WTC11 (cell line): ENCODE measurements at regions of chr20 and their contacts with region 1.

Region 1: DNA sequence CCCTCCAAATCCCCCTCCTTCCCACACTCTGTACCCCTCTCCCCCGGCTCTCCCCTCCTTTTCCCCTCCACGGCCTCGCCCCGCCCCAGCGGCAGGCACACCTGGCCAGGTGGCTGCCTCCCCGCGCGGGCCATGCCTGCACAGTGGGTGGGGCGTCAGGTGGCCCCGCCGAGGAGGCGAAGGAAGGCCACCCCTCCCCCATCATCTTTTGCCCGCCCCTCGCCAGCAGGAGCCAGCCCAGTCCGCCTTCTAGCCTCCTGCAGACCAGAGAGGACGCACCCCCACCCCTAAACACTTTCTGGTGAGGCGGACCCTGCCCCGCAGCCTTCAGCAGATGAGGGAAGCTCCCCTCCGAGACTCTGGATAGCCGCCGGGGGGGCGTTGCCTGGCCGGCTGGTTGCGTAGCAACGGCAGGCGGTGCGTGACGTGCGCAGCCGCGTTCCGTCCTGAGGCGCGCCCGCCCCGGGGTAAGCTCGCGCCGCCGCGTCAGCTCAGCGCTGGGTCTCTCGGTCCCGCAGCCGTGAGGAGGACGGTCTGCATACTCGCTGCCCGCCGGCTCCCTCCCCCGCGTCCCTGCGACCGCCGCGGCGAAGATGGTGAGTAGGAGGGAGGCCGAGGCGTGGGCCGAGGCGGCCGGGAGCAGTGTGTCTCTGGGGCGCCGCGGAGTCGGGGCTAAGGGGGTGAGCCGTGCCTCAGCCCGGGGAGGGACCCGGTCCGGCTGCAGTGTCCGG is at the start of gene DSTN:
- DNase-seq: peak; percentile 97
- ATAC-seq: peak; percentile 93
- H3K4me3 Mint-ChIP-seq: peak within 1 kb of the TSS; percentile 88
- H3K27ac Mint-ChIP-seq: peak within 1 kb of the TSS; percentile 94
- H3K4me1 Mint-ChIP-seq: peaks cover 50% of the 10 kb centered on the region
- H3K27me3 Mint-ChIP-seq: no peaks in the 10 kb centered on the region
- CTCF ChIP-seq: no peak
- total RNA-seq, gene DSTN: 145 to 153 TPM (median 149 TPM) in 3 replicates

Region 2: GRCh38 chr20:17273717-17274116 is 296.1 kb before region 1 on chr20:
- CTCF ChIA-PET with region 1: no interaction called
- POLR2A ChIA-PET with region 1: no interaction called
- DNase-seq: no peak
- ATAC-seq: no peak
- H3K4me3 Mint-ChIP-seq: no peak overlapping the region
- H3K27ac Mint-ChIP-seq: no peak overlapping the region
- H3K4me1 Mint-ChIP-seq: no peaks in the 10 kb centered on the region
- H3K27me3 Mint-ChIP-seq: no peaks in the 10 kb centered on the region; the same call in 1 of the 2 replicates
- CTCF ChIP-seq: no peak

Region 3: GRCh38 chr20:17504898-17505635 is 64.7 kb before region 1 on chr20:
- CTCF ChIA-PET with region 1: interaction called, 12 read pairs
- POLR2A ChIA-PET with region 1: interaction called, 7 read pairs
- DNase-seq: peak; percentile 58
- ATAC-seq: peak; percentile 83
- H3K4me3 Mint-ChIP-seq: peak overlapping the region; percentile 72
- H3K27ac Mint-ChIP-seq: no peak overlapping the region; the same call in 1 of the 2 replicates
- H3K4me1 Mint-ChIP-seq: peaks cover 16% of the 10 kb centered on the region
- H3K27me3 Mint-ChIP-seq: peaks cover 10% of the 10 kb centered on the region
- CTCF ChIP-seq: peak; percentile 29; the same call in 1 of the 2 replicates

Region 4: GRCh38 chr20:17530716-17531664 is 38.8 kb before region 1 on chr20 and contains the start of gene BFSP1:
- CTCF ChIA-PET with region 1: interaction called, 5 read pairs
- POLR2A ChIA-PET with region 1: interaction called, 12 read pairs
- DNase-seq: peak; percentile 74
- ATAC-seq: peak; percentile 69
- H3K4me3 Mint-ChIP-seq: peak within 1 kb of the TSS; percentile 82
- H3K27ac Mint-ChIP-seq: peak within 1 kb of the TSS; percentile 85; the same call in 1 of the 2 replicates
- H3K4me1 Mint-ChIP-seq: peaks cover 26% of the 10 kb centered on the region
- H3K27me3 Mint-ChIP-seq: peaks cover 22% of the 10 kb centered on the region
- CTCF ChIP-seq: no peak
- total RNA-seq, gene BFSP1: 1.9 to 3.0 TPM (median 2.7 TPM) in 3 replicates

Region 5: DNA sequence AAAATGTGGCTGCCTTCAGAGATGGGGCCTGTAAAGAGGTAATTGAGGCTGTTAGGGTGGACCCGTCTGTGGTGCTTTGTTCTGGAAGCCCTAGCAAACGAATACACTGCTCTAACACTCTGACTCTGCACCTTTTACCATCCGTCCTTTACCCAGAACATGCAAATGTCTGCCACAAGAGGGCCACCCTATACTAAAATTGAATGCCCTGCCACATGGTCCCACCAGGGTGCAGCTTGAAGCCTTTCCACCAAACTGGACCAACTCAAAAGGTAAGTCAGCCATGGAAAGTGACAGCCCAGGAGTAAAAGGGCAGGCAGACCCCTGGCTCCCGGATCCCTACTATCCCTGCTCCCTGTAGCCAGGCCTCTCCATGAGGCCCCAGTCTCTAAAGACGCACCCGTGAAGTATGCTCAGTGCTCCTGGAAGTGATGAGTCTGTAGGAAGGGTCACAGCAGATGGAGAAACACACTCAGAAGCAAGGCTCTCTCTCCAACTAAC is 32.8 kb before region 1 on chr20:
- CTCF ChIA-PET with region 1: interaction called, 14 read pairs
- POLR2A ChIA-PET with region 1: interaction called, 9 read pairs
- DNase-seq: peak; percentile 77
- ATAC-seq: peak; percentile 94
- H3K4me3 Mint-ChIP-seq: no peak overlapping the region
- H3K27ac Mint-ChIP-seq: no peak overlapping the region
- H3K4me1 Mint-ChIP-seq: peaks cover 21% of the 10 kb centered on the region
- H3K27me3 Mint-ChIP-seq: peaks cover 1% of the 10 kb centered on the region
- CTCF ChIP-seq: peak; percentile 59; the same call in 1 of the 2 replicates

Region 6: DNA sequence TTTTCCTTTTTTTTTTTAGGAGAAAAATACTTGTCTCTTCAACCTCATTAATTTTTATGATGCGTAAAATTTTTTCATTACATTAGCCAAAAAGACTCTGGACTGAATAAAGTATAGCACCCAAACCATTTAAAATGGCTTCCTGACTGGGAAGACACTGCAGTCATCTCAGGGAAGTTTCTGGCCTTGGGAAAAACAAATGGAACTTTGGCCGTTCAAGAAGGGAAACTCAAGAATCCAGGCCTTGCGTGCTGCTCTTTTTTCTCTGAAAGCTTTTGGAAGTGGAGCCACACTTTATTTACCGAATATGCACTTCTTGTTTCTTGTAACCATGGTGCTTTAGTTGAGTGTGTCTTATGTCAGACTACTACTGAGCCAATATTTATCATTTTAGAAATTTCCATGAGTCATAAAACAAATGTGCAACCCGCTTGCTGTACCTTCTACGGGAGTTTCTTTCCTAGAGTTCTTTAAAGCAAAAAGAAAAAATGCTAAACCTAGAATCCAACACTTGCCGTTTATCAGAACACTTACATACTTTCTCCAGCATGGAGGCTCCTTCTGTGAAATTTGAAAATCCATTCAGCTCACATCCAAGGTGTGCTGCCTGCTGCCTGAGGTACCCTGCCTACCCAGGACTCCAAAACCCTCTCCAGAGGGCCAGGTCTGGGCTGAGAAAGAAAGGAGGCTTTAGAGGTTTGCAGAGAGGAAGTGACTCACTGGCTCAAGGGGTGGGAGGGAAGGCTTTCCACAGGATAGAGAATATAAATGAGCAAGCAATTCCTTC is 11.4 kb before region 1 on chr20:
- CTCF ChIA-PET with region 1: interaction called, 5 read pairs
- POLR2A ChIA-PET with region 1: interaction called, 23 read pairs
- DNase-seq: no peak
- ATAC-seq: peak; percentile 83
- H3K4me3 Mint-ChIP-seq: no peak overlapping the region
- H3K27ac Mint-ChIP-seq: peak overlapping the region; percentile 89
- H3K4me1 Mint-ChIP-seq: peaks cover 28% of the 10 kb centered on the region
- H3K27me3 Mint-ChIP-seq: no peaks in the 10 kb centered on the region
- CTCF ChIP-seq: no peak

Region 7: DNA sequence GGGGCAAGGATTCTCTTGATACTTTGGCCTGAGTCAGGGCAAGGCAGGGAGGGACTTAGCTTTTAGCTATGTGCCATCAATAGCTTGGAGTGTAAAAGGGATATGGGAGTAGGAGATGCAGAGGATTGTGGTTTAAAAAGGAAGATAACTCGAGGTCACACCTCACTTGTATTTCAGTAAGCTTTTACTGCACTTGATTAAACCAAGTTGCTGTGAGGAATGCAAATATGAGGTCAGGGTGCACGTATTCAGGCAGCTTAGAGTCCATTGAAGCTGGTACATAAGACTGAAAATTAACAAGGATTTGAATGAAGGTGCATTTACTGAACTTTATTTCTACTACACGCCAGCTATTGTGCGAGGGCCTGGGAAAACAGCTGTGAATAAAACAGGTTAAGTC is 32.2 kb after region 1 on chr20:
- CTCF ChIA-PET with region 1: interaction called, 11 read pairs
- POLR2A ChIA-PET with region 1: interaction called, 4 read pairs
- DNase-seq: no peak
- ATAC-seq: no peak; the same call in 1 of the 2 replicates
- H3K4me3 Mint-ChIP-seq: no peak overlapping the region
- H3K27ac Mint-ChIP-seq: peak overlapping the region; percentile 75
- H3K4me1 Mint-ChIP-seq: peaks cover 33% of the 10 kb centered on the region
- H3K27me3 Mint-ChIP-seq: no peaks in the 10 kb centered on the region
- CTCF ChIP-seq: no peak

Region 8: DNA sequence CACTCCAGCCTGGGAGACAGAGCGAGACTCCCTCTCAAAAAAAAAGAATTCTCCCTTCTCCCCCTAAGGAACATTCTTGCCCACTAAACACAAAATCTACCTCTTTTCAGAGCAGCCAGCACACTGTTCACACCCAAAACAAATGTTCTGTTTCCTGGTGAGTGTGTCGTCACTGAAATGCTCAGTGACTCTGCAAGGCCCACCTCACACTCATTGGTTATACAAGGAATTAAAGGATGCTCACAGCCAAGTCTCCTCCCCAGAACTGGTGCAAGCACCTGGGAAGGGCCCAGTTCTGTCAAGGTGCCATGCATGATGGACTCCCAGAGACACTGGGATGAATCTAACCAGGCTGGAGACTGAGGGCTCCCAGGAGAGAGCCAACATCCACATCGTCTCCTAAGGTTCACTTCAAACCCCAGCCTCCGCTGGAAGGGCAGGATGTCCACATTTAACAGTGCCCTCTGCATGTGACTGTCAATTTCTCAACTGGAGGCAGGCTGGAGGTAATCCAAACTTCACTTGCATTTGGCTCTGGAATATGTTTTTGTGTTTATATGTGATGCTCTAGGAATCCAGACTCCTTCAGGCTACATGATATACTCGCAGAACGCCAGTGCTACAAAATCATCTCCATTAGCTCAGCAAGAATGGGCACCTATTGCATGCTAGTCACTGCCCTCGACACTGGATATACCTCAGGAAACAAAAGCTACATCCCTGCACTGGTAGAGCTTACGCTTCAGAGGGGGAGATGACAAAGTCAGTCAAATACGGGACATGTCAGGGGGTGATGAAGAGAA is 105.1 kb after region 1 on chr20:
- CTCF ChIA-PET with region 1: no interaction called
- POLR2A ChIA-PET with region 1: no interaction called
- DNase-seq: no peak
- ATAC-seq: no peak
- H3K4me3 Mint-ChIP-seq: no peak overlapping the region
- H3K27ac Mint-ChIP-seq: peak overlapping the region; percentile 83; the same call in 1 of the 2 replicates
- H3K4me1 Mint-ChIP-seq: peaks cover 54% of the 10 kb centered on the region
- H3K27me3 Mint-ChIP-seq: no peaks in the 10 kb centered on the region
- CTCF ChIP-seq: no peak

Region 9: DNA sequence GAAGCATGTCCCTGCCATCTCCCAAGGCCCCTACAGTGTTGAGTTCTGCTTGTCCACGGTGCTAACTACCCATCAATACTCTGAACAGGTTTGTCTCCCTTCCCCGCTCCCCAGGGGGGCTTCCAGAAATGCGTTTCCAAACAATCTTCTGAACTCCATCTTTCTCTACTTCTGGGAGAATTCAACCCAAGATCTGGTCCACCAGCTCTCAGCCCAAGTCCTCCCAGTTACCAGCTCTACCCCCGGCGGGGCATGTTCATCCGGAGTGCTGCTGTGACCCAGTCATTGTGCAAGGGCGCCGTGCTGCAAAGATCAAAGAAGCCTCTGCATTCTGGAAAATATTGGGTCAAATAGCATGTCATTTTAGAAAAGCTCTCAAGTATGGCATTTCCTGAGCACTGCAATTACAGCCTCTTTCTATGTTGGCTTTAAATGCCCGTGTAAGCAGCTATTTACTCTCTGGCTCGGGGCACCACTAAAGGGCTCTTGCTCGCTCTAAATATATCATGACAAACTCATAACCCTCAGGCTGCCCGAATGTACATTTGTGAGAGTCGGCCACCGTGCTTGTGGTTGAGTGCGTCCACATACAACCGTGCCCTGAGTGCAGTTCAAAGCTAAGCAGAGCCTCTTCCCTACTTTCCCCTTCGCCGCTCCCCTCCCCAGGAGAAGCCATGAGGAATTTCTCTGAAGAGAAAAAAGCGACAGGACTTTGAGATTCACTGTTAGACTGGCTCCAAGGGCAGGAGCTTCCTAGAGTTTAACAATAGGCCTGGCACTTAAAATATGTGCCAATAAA is 201.6 kb after region 1 on chr20:
- CTCF ChIA-PET with region 1: no interaction called
- POLR2A ChIA-PET with region 1: no interaction called
- DNase-seq: no peak
- ATAC-seq: no peak
- H3K4me3 Mint-ChIP-seq: no peak overlapping the region
- H3K27ac Mint-ChIP-seq: no peak overlapping the region
- H3K4me1 Mint-ChIP-seq: peaks cover 10% of the 10 kb centered on the region
- H3K27me3 Mint-ChIP-seq: peaks cover 5% of the 10 kb centered on the region
- CTCF ChIP-seq: no peak